ENCODE measurements at regions of chr1 and their contacts with region 1.

Region 1: DNA sequence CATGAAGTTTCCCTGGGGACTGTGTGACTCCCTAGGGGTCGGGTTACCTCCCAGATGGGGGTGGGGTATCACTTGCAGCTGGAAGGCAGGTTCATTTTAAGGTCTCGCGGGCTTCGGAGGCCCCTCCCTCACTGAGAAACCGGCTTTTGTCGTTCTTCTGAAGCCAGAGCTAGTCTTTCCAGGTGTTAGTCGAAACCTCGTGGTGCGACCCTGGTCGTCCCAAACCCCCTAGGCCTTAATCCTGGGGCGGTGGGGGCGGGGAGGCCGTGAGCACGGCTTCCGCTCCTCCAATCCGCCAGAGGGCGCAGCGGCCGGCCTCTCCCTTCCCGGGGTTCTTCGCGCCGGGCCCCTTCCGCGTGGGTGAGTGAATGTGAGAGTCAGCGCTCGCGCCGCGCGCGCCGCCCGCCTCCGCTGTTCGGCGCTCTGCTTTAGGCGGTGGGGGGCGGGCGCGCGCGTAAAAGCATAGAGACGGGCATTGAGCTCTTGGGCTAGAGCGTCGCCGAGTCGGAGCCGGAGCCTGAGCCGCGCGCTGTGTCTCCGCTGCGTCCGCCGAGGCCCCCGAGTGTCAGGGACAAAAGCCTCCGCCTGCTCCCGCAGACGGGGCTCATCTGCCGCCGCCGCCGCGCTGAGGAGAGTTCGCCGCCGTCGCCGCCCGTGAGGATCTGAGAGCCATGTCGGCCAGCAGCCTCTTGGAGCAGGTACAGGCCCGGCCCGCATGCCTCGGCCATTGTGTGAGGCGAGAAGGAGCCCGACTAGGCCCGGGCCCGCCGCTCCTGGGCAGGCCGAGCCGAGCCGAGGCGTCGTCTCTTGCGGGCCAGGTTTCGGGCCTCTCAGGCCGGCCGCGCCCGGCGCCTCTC is at the start of gene YTHDF2:
- DNase-seq: peak; percentile 95
- H3K4me3 Mint-ChIP-seq: peak within 1 kb of the TSS; percentile 99
- H3K27ac Mint-ChIP-seq: peak within 1 kb of the TSS; percentile 91
- H3K4me1 Mint-ChIP-seq: peaks cover 23% of the 10 kb centered on the region
- H3K27me3 Mint-ChIP-seq: no peaks in the 10 kb centered on the region
- total RNA-seq, gene YTHDF2: 88.2 and 98.4 TPM in 2 replicates

Region 2: DNA sequence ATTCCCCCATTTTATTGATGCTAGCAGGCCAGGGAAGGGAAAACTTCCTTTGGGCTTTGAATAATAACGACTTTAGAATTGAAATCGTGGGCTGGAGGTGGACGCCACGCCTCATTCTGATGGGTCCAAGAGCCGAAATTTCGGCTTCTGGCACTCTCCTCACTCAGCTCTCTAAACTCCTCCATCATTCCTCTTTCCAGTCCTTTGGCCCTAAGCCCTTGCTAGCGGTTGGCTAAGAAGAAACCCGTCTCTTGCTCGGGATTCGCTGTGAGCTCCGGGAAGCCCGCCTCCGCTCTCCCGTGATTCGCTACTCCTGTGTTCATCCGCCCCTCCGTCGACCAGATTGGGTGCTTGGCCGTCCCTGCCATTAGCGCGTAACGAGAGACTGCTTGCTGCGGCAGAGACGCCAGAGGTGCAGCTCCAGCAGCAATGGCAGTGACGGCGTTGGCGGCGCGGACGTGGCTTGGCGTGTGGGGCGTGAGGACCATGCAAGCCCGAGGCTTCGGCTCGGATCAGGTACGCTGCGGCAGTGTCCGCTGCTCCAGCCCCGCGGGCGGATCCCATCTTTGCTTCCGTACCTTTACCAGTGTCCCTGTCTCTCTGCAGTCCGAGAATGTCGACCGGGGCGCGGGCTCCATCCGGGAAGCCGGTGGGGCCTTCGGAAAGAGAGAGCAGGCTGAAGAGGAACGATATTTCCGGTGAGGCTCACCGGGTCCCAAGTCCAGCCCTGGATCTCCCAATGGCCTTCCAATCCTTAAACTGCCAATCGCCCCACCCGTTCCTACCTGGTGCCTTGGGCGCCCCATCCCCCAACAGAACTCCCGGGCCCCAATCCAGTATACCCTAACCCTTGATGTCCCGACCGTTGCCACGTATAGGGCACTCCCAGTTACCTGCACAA is 500.7 kb before region 1 on chr1 and contains the start of gene ATP5IF1:
- intact Hi-C with region 1: loop called (anchors 5 kb)
- DNase-seq: peak; percentile 93
- H3K4me3 Mint-ChIP-seq: no peak within 1 kb of the TSS
- H3K27ac Mint-ChIP-seq: no peak within 1 kb of the TSS
- H3K4me1 Mint-ChIP-seq: peaks cover 7% of the 10 kb centered on the region
- H3K27me3 Mint-ChIP-seq: no peaks in the 10 kb centered on the region
- total RNA-seq, gene ATP5IF1: 134 and 137 TPM in 2 replicates

Region 3: GRCh38 chr1:28518000-28518744 is 218.5 kb before region 1 on chr1:
- intact Hi-C with region 1: loop called (anchors 2 kb)
- DNase-seq: peak; percentile 84
- H3K4me3 Mint-ChIP-seq: peak overlapping the region; percentile 89
- H3K27ac Mint-ChIP-seq: peak overlapping the region; percentile 93
- H3K4me1 Mint-ChIP-seq: peaks cover 36% of the 10 kb centered on the region
- H3K27me3 Mint-ChIP-seq: no peaks in the 10 kb centered on the region

Region 4: GRCh38 chr1:28581536-28582247 is 155.0 kb before region 1 on chr1:
- intact Hi-C with region 1: loop called (anchors 5 kb)
- DNase-seq: peak; percentile 95
- H3K4me3 Mint-ChIP-seq: peak overlapping the region; percentile 96
- H3K27ac Mint-ChIP-seq: peak overlapping the region; percentile 94
- H3K4me1 Mint-ChIP-seq: peaks cover 21% of the 10 kb centered on the region
- H3K27me3 Mint-ChIP-seq: no peaks in the 10 kb centered on the region

Region 5: DNA sequence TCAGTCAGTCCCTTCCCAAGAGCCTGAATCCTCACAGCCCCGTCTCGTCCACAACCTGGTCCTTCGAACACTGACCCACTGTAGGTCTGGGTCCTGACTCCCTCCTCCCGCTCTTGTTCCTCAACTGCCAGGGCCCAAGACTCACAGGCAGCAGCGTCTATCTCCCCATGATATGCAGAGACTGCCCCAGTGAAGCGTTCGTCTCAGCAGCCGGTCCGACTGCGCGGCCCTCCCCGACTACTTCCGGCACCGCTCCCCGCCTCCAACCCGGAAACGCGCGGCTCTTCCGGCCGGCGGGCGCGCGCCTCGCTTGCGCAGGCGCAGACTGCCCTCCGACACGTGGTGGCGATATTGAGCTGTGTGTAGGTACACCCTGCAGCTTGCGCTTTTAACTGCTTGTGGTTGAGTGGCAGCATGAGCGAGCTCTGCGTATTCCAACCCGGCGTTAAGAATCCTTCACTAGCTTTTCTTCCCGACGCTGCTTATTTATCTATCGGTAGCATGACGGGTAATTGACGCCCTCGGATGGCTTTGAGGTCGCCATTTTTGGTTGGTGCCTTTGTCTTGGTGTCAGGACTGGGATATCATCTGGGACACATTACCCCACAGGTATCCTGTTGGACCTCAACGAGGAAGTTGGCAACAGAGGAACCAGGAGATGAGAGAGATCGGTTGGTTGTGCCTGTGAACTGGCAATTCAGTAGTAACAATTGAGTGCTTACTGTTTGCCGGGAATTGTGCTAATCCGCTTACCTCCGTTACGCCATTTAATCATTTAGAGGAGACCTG is 93.6 kb before region 1 on chr1 and contains the start of gene TAF12:
- intact Hi-C with region 1: loop called (anchors 1 kb)
- DNase-seq: peak; percentile 88
- H3K4me3 Mint-ChIP-seq: peak within 1 kb of the TSS; percentile 99
- H3K27ac Mint-ChIP-seq: peak within 1 kb of the TSS; percentile 97
- H3K4me1 Mint-ChIP-seq: peaks cover 37% of the 10 kb centered on the region
- H3K27me3 Mint-ChIP-seq: no peaks in the 10 kb centered on the region
- total RNA-seq, gene TAF12: 30.8 and 32.0 TPM in 2 replicates

Region 6: DNA sequence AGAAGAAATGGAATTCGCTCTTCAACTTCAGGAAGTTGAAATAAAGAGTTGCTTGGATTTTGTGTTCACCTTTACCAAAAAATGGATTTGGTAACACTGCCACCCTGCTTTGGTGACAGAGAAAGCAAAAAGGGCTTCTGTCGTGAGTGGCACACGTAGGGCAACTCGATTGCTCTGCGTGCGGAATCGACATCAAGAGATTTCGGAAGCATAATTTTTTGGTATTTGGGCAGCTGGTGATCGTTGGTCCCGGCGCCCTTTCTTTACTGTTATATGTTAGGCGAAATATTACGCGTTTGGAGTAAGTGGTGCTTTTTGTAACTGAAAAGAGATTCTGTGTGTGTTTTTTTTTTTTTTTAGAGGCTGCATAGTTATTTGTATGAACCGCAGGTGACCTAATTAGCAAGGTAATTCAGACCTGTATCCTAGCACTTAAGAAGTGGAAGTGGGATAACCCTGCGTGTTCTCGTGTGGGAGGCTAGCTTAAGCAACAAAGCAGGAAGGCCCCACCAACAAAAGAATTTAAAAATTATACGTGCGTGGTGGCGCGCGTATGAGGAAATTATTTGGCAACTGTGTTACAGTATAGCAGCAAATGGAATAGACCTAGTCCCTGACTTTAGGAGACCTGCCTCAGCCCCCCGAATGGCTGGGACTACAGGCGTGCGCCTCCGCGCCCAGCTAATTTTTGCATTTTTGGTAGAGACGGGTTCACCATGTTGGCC is 88.0 kb before region 1 on chr1 and contains the start of gene RNU11:
- intact Hi-C with region 1: loop called (anchors 1 kb)
- DNase-seq: peak; percentile 84
- H3K4me3 Mint-ChIP-seq: peak within 1 kb of the TSS; percentile 81
- H3K27ac Mint-ChIP-seq: peak within 1 kb of the TSS; percentile 99
- H3K4me1 Mint-ChIP-seq: peaks cover 25% of the 10 kb centered on the region
- H3K27me3 Mint-ChIP-seq: no peaks in the 10 kb centered on the region
- total RNA-seq, gene RNU11: not detected in 2 replicates

Region 7: DNA sequence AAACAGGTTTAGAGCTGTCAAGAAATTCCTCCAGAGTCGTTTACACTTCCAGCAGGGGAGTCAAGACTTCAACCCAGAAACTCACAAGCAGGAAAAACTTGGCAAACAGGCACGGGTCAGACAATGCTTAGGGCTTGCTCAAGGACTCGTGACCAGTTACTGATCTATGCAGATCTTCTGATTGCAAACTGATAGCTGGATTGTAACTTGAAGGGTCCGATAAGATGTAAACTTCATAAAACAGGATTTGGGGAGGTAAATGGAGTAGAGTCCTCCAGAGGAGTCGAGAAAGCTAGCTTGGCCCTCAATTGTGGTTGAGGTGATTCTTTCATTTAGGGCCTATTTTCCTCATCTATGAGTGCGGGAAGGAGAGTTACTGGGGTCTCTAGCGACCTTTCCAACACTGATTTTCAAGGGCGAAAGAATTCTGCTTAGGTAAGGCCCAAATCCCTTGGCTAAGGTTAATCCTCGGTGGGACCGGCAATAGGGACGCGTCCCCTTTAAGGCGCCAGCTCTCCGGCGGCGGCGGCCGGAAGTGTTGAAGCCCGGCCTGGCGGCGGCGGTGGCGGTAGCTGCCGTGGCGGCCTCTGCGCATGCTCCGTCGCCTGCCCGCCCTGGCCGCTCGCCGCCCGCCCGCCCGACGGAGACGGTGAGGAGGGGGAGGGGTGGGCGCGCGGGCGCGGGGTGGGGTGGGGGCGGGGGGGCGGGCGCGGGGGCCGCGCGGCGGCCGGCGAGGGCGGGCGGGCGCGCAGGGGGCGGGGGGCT is 68.3 kb before region 1 on chr1 and contains the start of gene GMEB1:
- intact Hi-C with region 1: loop called (anchors 1 kb)
- DNase-seq: peak; percentile 83
- H3K4me3 Mint-ChIP-seq: peak within 1 kb of the TSS; percentile 93
- H3K27ac Mint-ChIP-seq: peak within 1 kb of the TSS; percentile 99
- H3K4me1 Mint-ChIP-seq: peaks cover 10% of the 10 kb centered on the region
- H3K27me3 Mint-ChIP-seq: no peaks in the 10 kb centered on the region
- total RNA-seq, gene GMEB1: 24.8 and 26.0 TPM in 2 replicates

Region 8: DNA sequence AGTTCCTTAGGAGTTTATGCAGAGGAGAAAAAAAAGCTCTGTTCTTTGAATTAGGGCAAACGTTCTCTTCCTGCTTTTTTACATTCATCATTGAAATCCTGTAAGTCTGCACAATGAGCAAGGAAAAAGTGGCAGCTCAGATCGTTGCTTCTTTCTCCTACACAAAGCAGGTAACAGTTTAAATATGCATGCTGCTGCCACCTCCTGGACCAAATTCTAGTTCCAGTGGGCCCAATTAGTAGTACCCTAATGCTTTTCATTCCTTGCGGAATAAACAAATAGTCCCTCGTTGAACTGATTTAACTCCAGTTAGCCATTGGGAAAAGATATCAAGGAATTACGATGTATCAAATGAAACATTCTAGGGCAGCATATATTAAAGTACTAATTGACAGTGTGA is 20.2 kb after region 1 on chr1:
- intact Hi-C with region 1: no loop called
- DNase-seq: no peak
- H3K4me3 Mint-ChIP-seq: no peak overlapping the region
- H3K27ac Mint-ChIP-seq: no peak overlapping the region
- H3K4me1 Mint-ChIP-seq: peaks cover 7% of the 10 kb centered on the region
- H3K27me3 Mint-ChIP-seq: no peaks in the 10 kb centered on the region

Region 9: GRCh38 chr1:29341936-29342335 is 605.3 kb after region 1 on chr1:
- intact Hi-C with region 1: no loop called
- DNase-seq: no peak
- H3K4me3 Mint-ChIP-seq: no peak overlapping the region
- H3K27ac Mint-ChIP-seq: no peak overlapping the region
- H3K4me1 Mint-ChIP-seq: no peaks in the 10 kb centered on the region
- H3K27me3 Mint-ChIP-seq: peaks cover 16% of the 10 kb centered on the region

Measured in activated T-helper 2 cell treated with anti-CD3 and anti-CD28 coated beads, Interferon-gamma antibody, Interleukin-2, Interleukin-4, amounts not matched to agents 10 μg/mL and 5 μg/mL and 100 μg/mL, durations not matched to agents 14 hours and 24 hours and 36 hours (primary cell).